Activated naive CD8-positive, alpha-beta T cell treated with anti-CD3 and anti-CD28 coated beads, Interleukin-2, amount 10 ng/mL, durations not matched to agents 7 days and 5 days (primary cell): ENCODE measurements at regions of chr13 and their contacts with region 1.

Region 1: GRCh38 chr13:36999054-36999714 is at the start of gene ALG5:
- DNase-seq: peak; percentile 98
- ATAC-seq: peak; percentile 69
- H3K4me3 Mint-ChIP-seq: peak within 1 kb of the TSS; percentile 99
- H3K27ac Mint-ChIP-seq: peak within 1 kb of the TSS; percentile 100
- H3K4me1 Mint-ChIP-seq: peaks cover 39% of the 10 kb centered on the region
- H3K27me3 Mint-ChIP-seq: no peaks in the 10 kb centered on the region
- total RNA-seq, gene ALG5: 22.5 to 27.2 TPM

Region 2: DNA sequence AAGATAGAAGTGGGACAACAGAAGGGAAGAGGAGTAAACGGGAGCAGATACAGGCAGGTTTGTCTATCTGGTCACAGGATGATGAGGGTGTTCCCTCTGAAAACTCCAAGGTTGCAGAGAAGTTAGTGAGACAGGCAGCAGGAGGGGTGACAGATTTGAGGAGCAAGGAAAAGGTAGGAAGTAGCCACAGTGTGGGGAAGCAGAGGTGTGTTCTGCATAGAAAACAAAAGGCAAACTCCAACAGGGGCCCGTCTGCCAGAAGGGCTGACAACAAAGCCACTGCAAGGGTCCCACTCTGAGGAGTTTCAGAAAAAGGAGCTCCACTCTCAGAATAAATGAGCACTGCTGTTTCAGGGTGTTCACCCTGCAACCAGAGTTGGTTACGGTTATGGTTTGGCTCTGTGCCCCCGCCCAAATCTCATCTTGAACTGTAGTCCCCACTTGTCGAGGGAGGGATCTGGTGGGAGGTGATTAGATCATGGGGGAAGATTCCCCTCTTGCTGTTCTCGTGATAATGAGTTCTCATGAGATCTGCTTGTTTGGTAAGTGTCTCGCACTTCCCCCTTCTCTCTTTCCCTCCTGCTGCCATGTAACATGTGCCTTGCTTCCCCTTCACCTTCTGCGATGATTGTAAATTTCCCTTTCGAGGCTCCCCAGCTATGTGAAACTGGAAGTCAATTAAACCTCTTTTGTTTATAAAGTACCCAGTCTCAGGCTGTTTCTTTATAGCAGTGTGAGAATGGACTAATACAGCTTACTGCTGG is 111.2 kb before region 1 on chr13:
- POLR2A ChIA-PET with region 1: no interaction called
- DNase-seq: no peak
- ATAC-seq: no peak
- H3K4me3 Mint-ChIP-seq: no peak overlapping the region
- H3K27ac Mint-ChIP-seq: no peak overlapping the region
- H3K4me1 Mint-ChIP-seq: no peaks in the 10 kb centered on the region
- H3K27me3 Mint-ChIP-seq: peaks cover 22% of the 10 kb centered on the region

Region 3: GRCh38 chr13:36981156-36981743 is 17.9 kb before region 1 on chr13:
- POLR2A ChIA-PET with region 1: interaction called, 11 read pairs
- DNase-seq: no peak
- ATAC-seq: no peak
- H3K4me3 Mint-ChIP-seq: no peak overlapping the region
- H3K27ac Mint-ChIP-seq: no peak overlapping the region
- H3K4me1 Mint-ChIP-seq: no peaks in the 10 kb centered on the region
- H3K27me3 Mint-ChIP-seq: no peaks in the 10 kb centered on the region

Region 4: GRCh38 chr13:37011002-37011401 is 11.8 kb after region 1 on chr13:
- POLR2A ChIA-PET with region 1: interaction called, 19 read pairs
- DNase-seq: no peak
- ATAC-seq: no peak
- H3K4me3 Mint-ChIP-seq: no peak overlapping the region
- H3K27ac Mint-ChIP-seq: no peak overlapping the region
- H3K4me1 Mint-ChIP-seq: peaks cover 7% of the 10 kb centered on the region
- H3K27me3 Mint-ChIP-seq: no peaks in the 10 kb centered on the region

Region 5: DNA sequence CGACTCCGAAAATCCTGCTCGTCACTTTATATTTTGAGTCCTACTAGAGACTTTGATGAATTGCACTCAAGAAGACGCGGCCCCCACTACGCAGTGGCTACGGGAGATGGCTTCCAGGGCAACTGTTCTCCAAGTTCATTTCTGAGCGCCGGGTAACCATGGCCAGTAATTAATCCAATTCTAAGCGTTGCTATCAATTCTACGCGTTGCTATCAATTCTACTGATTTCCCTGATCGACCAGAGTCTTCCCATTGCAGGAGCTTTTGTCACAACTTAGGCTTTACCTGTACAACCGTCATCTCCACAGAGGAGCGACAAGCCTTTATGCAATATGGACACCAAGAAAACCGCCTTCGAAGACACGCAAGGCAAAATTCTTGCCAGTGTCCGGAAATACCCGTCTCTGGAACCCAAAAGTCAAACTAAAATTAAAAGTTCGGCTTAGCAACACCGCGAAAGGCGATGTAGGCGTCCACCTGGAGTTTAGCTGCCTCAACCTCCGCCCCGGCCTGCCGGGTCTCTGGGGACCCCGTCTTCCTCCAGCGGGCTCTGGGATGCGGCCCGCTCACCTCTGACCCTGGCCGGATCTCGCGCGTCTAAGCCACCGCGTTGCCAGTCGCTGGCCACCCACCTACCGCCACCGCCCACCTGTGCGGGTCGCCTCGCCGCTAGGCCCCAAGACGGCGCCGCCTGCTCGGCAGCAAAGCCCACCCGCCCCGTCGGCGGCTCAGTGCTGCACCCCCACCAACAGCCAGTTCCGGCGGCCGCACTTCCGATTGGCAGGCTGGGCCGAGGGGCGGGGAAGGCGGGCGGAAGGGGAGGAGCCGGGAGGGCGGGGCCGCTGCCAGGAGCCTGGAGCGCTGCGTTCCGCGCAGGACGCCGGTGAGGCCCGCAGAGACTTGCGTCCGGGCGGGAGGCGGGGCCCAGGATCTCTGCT is 60.0 kb after region 1 on chr13 and contains the start of gene SUPT20H:
- POLR2A ChIA-PET with region 1: interaction called, 13 read pairs
- DNase-seq: peak; percentile 93
- ATAC-seq: peak; percentile 96
- H3K4me3 Mint-ChIP-seq: peak within 1 kb of the TSS; percentile 98
- H3K27ac Mint-ChIP-seq: peak within 1 kb of the TSS; percentile 97
- H3K4me1 Mint-ChIP-seq: peaks cover 12% of the 10 kb centered on the region
- H3K27me3 Mint-ChIP-seq: peaks cover 4% of the 10 kb centered on the region
- total RNA-seq, gene SUPT20H: 79.6 to 88.4 TPM

Region 6: DNA sequence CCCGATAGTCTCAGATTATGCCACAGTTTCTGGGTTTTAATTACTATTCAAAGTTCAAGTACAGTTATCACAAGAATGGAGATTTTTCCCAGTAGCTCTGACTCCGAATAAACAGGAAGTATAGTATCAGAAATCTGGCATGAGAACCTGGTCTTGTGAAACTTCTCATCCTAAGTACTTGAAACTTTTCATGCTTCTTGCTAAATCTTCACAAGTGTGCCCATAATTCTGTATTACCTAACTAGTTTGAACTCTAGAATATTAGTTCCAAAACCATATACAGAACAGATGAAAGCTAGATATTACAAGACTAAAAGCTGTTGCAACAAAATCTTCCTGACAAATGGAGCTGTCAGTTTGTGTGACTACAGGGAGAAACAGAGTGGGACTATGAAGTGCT is 176.8 kb after region 1 on chr13:
- POLR2A ChIA-PET with region 1: no interaction called
- DNase-seq: no peak
- ATAC-seq: no peak
- H3K4me3 Mint-ChIP-seq: no peak overlapping the region
- H3K27ac Mint-ChIP-seq: no peak overlapping the region
- H3K4me1 Mint-ChIP-seq: no peaks in the 10 kb centered on the region
- H3K27me3 Mint-ChIP-seq: no peaks in the 10 kb centered on the region